Right cardiac atrium (tissue), 5 donors: ENCODE measurements at regions of chr19 and their contacts with region 1.

Region 1: GRCh38 chr19:35585848-35586247 is at the start of gene PMIS2:
- DNase-seq: peak in 1 of 3 donors; percentile 53
- ATAC-seq: peak in 1 of 2 donors; percentile 44
- H3K4me3 ChIP-seq: no peak within 1 kb of the TSS
- H3K27ac ChIP-seq: no peak within 1 kb of the TSS
- H3K4me1 ChIP-seq: no peaks in the 10 kb centered on the region
- H3K27me3 ChIP-seq: no peaks in the 10 kb centered on the region
- total RNA-seq, gene PMIS2: not detected

Region 2: DNA sequence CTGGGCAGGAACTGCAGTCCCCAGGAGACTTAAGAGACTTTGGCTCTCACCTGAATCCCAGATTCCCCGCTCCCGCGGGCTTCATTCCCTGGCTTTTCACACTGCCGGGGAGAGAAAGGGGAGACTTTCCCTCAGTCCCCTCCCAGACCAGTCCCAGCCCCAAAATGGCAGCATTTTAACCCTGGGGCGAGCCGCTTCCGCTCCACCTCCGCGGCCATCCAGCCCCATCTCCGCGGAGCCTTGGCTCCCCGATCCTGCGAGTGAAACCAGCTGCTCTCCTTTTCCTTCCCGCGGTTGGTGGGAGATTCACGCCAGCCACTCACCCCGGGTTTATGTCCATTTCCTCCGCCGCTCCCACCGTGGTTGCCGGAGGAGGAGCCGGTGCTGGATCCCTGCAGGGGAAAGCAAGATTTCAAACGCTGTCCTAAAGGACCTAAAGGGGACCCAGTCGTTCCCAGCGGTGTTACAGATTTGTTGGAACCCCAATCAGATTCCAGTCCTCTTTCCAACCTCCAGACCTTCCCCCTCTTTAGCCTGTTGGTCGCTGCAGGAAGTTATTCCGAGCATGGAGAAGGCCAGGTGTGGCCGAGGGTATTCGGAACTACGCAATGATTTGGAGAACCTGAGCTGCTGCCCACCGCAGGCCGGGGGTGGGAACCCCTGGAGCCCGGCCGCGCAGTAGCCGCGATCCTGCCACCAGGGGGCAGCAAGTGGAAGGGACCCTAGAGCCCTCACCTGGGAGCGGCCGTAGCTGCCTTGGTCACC is 75.8 kb before region 1 on chr19:
- intact Hi-C with region 1: loop called in 1 of 4 experiments (anchors 10 kb)
- DNase-seq: peak; percentile 77 to 91 (median 90)
- ATAC-seq: peak; percentile 84 to 87
- H3K4me3 ChIP-seq: peak overlapping the region; percentile 29
- H3K27ac ChIP-seq: no peak overlapping the region
- H3K4me1 ChIP-seq: no peaks in the 10 kb centered on the region
- H3K27me3 ChIP-seq: no peaks in the 10 kb centered on the region